CD8-positive, alpha-beta T cell (primary cell): ENCODE measurements at regions of chr22 and their contacts with region 1.

Region 1: DNA sequence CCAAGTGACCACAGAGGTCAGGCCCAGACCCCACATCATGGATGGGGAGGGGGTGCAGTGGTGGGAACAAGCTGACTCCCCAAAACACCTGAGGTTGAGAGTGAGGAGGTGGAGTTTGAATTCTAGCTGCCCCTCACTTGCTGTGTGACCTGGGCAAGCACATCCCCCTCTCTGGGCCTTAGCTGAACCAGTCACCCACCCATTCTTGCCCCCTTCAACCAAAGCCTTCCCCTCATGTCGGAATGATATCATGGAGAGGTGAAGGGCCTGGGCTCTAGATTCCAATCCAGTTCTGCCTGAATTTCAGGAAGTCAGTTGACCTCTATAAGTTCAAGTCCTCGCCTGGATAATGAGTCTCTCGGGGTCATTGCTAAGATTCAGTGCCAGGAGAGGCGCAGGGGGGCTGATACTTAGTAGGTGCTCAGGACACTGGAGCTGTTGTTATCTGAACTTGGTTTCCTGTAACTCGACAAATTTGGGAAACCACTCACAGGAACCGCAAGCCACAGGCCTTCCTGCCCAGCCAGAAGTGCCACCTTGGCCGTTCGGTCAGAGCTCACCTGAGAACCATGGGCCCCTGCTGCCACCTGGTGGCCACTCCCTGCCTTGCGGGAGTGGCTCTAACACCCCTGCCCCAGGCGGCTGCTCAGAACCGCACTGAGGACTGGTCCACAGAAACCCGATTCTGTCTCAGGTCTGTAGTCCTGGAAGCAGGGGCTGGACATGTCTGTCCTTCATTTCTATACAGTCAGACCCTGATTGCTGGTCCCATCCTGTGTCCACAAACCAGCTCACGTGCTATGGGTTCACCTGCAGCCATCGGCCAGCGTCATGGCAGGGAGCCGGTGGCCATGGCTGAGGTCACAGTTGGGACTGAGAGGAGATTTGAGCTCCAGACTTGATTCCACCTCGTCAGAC is 6.9 kb downstream of the CDC42EP1 start:
- DNase-seq: peak; percentile 77 to 97 (median 92)
- ATAC-seq: peak; percentile 85
- H3K4me3 ChIP-seq: peak overlapping the region; percentile 9 to 10
- H3K4me3 Mint-ChIP-seq: peak overlapping the region; percentile 75
- H3K27ac ChIP-seq: no peak overlapping the region
- H3K27ac Mint-ChIP-seq: peak overlapping the region; percentile 66
- H3K4me1 ChIP-seq: peaks cover 24% of the 10 kb centered on the region
- H3K4me1 Mint-ChIP-seq: peaks cover 24% of the 10 kb centered on the region
- H3K27me3 ChIP-seq: peaks cover under 1 to 9% of the 10 kb centered on the region in 2 experiments
- H3K27me3 Mint-ChIP-seq: peaks cover 15% of the 10 kb centered on the region
- CTCF ChIP-seq: peak; percentile 93

Region 2: DNA sequence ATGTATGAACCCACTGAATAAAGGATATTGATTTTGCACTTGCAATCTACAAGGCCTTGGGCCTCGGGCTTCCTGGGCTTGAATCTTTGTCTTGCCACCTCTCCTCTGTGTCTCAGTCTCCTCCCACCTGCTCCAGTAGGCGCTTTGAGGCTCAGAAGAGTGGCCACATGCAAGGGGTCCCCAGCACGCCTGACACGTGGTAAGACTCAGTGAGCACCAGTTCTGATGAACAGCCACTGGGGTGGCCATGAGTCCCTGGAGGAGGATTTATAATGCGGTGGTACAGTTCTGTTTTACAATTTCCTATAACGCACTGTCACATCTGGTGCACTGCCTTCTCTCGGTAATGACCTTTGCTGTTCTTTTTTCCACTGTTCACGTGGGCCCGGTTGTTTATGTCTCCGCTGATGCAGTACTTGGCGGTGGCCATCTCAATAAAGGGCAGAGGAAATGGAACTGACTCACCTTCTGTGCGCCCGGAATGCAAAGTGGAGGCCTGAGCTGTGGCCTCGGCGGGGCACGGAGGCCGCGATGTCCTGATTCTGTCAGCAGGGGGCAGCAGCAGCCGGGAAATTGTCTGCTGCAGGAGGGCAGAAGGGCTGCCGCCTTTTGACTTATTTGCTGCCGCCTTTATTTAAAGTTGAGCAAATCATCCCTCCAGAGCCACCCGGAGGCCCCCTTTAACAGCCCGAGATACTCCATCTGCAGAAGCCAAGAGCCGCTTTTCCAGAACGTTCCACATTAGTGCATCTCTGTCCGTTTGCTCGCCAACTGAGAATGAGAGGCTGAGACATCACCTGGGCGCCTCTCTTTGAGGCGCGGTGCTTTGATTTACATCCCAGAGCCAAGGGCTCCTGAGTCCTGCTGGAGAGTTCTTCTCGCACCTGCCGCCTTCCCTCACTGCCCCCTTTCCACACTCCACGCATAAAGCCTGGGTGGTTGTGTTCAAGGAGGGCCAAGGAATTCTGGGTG is 785.2 kb before region 1 on chr22:
- CTCF ChIA-PET with region 1: no interaction called
- POLR2A ChIA-PET with region 1: no interaction called
- intact Hi-C with region 1: loop called in 1 of 2 experiments (anchors 5 kb)
- DNase-seq: peak; percentile 71 to 93 (median 85)
- ATAC-seq: peak; percentile 96
- H3K4me3 ChIP-seq: no peak overlapping the region
- H3K4me3 Mint-ChIP-seq: no peak overlapping the region
- H3K27ac ChIP-seq: no peak overlapping the region
- H3K27ac Mint-ChIP-seq: peak overlapping the region; percentile 41
- H3K4me1 ChIP-seq: peaks cover 11% of the 10 kb centered on the region
- H3K4me1 Mint-ChIP-seq: peaks cover 16% of the 10 kb centered on the region
- H3K27me3 ChIP-seq: peaks cover 0 to 2% of the 10 kb centered on the region in 2 experiments
- H3K27me3 Mint-ChIP-seq: peaks cover 2% of the 10 kb centered on the region
- CTCF ChIP-seq: peak; percentile 95

Region 3: GRCh38 chr22:37316875-37317371 is 250.2 kb before region 1 on chr22:
- CTCF ChIA-PET with region 1: interaction called, 25 read pairs
- POLR2A ChIA-PET with region 1: interaction called, 7 read pairs
- intact Hi-C with region 1: loop called (anchors 1 kb)
- DNase-seq: peak; percentile 37 to 85 (median 72)
- ATAC-seq: peak; percentile 91
- H3K4me3 ChIP-seq: no peak overlapping the region
- H3K4me3 Mint-ChIP-seq: no peak overlapping the region
- H3K27ac ChIP-seq: no peak overlapping the region
- H3K27ac Mint-ChIP-seq: no peak overlapping the region
- H3K4me1 ChIP-seq: peaks cover 36% of the 10 kb centered on the region
- H3K4me1 Mint-ChIP-seq: peaks cover 42% of the 10 kb centered on the region
- H3K27me3 ChIP-seq: no peaks in the 10 kb centered on the region
- H3K27me3 Mint-ChIP-seq: no peaks in the 10 kb centered on the region
- CTCF ChIP-seq: peak; percentile 85

Region 4: GRCh38 chr22:37486224-37486845 is 80.8 kb before region 1 on chr22 and contains the start of gene MFNG:
- CTCF ChIA-PET with region 1: interaction called, 9 read pairs
- POLR2A ChIA-PET with region 1: interaction called, 4 read pairs
- intact Hi-C with region 1: loop called in 1 of 2 experiments (anchors 2 kb)
- DNase-seq: peak; percentile 35 to 87 (median 74)
- ATAC-seq: peak; percentile 59
- H3K4me3 ChIP-seq: peak within 1 kb of the TSS; percentile 73 to 96
- H3K4me3 Mint-ChIP-seq: peak within 1 kb of the TSS; percentile 94
- H3K27ac ChIP-seq: peak within 1 kb of the TSS; percentile 69 to 87
- H3K27ac Mint-ChIP-seq: peak within 1 kb of the TSS; percentile 98
- H3K4me1 ChIP-seq: peaks cover 62% of the 10 kb centered on the region
- H3K4me1 Mint-ChIP-seq: peaks cover 72% of the 10 kb centered on the region
- H3K27me3 ChIP-seq: no peaks in the 10 kb centered on the region
- H3K27me3 Mint-ChIP-seq: no peaks in the 10 kb centered on the region
- CTCF ChIP-seq: no peak
- total RNA-seq, gene MFNG: 63.2 to 63.9 TPM

Region 5: GRCh38 chr22:37538590-37539357 is 28.4 kb before region 1 on chr22:
- CTCF ChIA-PET with region 1: interaction called, 540 read pairs
- POLR2A ChIA-PET with region 1: interaction called, 32 read pairs
- intact Hi-C with region 1: loop called (anchors 1 kb)
- DNase-seq: peak; percentile 80 to 93 (median 89)
- ATAC-seq: peak; percentile 99
- H3K4me3 ChIP-seq: no peak overlapping the region
- H3K4me3 Mint-ChIP-seq: peak overlapping the region; percentile 56
- H3K27ac ChIP-seq: no peak overlapping the region
- H3K27ac Mint-ChIP-seq: no peak overlapping the region
- H3K4me1 ChIP-seq: peaks cover 16% of the 10 kb centered on the region
- H3K4me1 Mint-ChIP-seq: peaks cover 17% of the 10 kb centered on the region
- H3K27me3 ChIP-seq: peaks cover 0 to 8% of the 10 kb centered on the region in 2 experiments
- H3K27me3 Mint-ChIP-seq: peaks cover 30% of the 10 kb centered on the region
- CTCF ChIP-seq: peak; percentile 89

Region 6: GRCh38 chr22:37588546-37589215 is 21.5 kb after region 1 on chr22:
- CTCF ChIA-PET with region 1: interaction called, 101 read pairs
- POLR2A ChIA-PET with region 1: interaction called, 12 read pairs
- intact Hi-C with region 1: loop called (anchors 1 kb)
- DNase-seq: no peak
- ATAC-seq: no peak
- H3K4me3 ChIP-seq: no peak overlapping the region
- H3K4me3 Mint-ChIP-seq: no peak overlapping the region
- H3K27ac ChIP-seq: no peak overlapping the region
- H3K27ac Mint-ChIP-seq: no peak overlapping the region
- H3K4me1 ChIP-seq: peaks cover 6% of the 10 kb centered on the region
- H3K4me1 Mint-ChIP-seq: peaks cover 11% of the 10 kb centered on the region
- H3K27me3 ChIP-seq: peaks cover 0 to 2% of the 10 kb centered on the region in 2 experiments
- H3K27me3 Mint-ChIP-seq: peaks cover 3% of the 10 kb centered on the region
- CTCF ChIP-seq: no peak

Region 7: DNA sequence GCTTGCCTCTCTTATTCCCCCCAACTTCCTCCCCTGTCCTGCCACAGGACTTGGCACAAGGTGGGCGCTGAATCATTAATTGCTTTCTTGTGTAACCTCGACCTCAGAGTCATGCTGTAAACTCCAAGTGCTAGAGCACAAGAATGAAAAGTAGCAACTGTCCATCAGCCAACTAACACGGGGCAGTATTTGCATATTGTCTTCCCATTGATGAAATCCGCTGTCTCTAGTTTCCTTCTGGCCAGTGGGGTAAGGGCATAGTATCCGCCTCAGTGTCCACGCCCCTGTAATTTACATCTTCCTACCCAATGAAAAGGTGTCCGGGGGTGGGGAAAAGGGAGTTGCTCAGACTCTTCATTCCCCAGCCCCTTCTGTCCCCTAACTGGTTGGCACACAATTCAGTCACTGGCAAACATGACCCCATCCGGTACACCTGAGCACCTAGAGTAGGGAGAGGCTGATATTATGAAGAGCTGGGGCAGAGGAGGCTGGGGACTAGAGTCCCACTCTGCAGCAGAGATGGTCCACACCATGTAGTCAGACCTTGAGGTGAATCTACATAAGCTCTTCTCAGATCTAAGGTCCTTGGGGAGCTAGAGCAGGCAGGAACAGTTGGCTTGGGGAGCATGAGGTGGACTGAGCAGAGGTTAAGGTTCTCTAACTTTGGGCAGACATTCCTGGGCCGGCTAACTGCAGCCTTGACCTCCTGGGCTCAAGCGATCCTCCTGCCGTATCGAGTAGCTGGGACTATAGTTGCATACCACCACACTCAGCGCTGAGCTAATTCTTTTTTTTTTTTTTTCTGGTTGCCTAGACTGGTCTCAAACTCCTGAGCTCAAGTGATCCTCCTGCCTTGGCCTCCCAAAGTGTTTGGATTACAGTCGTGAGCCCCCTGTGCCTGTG is 34.6 kb after region 1 on chr22:
- CTCF ChIA-PET with region 1: interaction called, 26 read pairs
- POLR2A ChIA-PET with region 1: interaction called, 4 read pairs
- intact Hi-C with region 1: loop called in 1 of 2 experiments (anchors 5 kb)
- DNase-seq: no peak
- ATAC-seq: no peak
- H3K4me3 ChIP-seq: no peak overlapping the region
- H3K4me3 Mint-ChIP-seq: no peak overlapping the region
- H3K27ac ChIP-seq: no peak overlapping the region
- H3K27ac Mint-ChIP-seq: no peak overlapping the region
- H3K4me1 ChIP-seq: peaks cover 27% of the 10 kb centered on the region
- H3K4me1 Mint-ChIP-seq: peaks cover 31% of the 10 kb centered on the region
- H3K27me3 ChIP-seq: no peaks in the 10 kb centered on the region
- H3K27me3 Mint-ChIP-seq: no peaks in the 10 kb centered on the region
- CTCF ChIP-seq: no peak

Region 8: DNA sequence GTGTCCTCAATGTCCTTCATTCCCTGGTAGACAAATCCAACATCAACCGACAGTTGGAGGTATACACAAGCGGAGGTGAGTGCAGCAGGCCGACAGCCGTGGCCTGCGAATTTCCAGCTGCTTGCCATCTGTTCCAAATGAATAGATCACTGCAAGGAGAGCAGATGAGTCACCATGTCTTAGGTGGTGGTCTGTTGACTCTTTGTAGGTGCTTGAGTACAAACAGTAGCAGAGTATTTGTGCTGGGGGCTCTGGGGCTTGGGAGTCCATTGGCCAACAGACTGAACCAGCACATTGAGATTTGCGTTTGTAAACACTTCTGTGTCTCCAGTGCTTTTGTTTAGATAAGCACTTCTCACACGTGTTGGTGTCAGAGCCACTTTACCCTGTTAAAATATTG is 303.1 kb after region 1 on chr22:
- CTCF ChIA-PET with region 1: no interaction called
- POLR2A ChIA-PET with region 1: no interaction called
- intact Hi-C with region 1: no loop called
- DNase-seq: no peak
- ATAC-seq: no peak
- H3K4me3 ChIP-seq: no peak overlapping the region
- H3K4me3 Mint-ChIP-seq: no peak overlapping the region
- H3K27ac ChIP-seq: no peak overlapping the region
- H3K27ac Mint-ChIP-seq: no peak overlapping the region
- H3K4me1 ChIP-seq: no peaks in the 10 kb centered on the region
- H3K4me1 Mint-ChIP-seq: peaks cover 1% of the 10 kb centered on the region
- H3K27me3 ChIP-seq: no peaks in the 10 kb centered on the region
- H3K27me3 Mint-ChIP-seq: no peaks in the 10 kb centered on the region
- CTCF ChIP-seq: no peak

Region 9: DNA sequence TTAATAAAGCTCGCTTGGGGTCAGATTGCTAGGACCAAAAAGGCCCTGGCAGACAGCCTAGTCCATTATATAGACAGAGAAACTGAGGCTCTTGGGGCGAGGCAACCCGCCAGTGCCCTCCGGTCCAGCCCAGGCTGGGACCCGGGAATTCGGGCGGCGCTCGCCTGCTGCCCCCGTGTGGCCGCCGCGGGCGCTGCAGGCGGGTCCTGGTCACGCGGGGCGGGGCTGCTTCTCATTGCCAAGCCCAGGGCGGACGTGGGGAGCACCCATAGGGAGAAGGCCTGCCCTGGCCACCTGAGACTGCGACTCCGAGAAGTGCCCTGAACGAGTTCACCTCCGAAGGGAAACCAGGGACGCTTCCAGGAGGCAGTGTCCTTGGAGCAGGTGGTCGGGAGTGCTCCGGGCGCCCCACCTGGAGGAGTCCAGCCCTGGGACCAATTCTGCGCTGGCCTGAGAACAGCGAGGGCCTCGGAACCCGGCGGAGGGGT is 786.0 kb after region 1 on chr22:
- CTCF ChIA-PET with region 1: no interaction called
- POLR2A ChIA-PET with region 1: no interaction called
- intact Hi-C with region 1: no loop called
- DNase-seq: peak; percentile 46 to 87 (median 69)
- ATAC-seq: peak; percentile 98
- H3K4me3 ChIP-seq: no peak overlapping the region
- H3K4me3 Mint-ChIP-seq: no peak overlapping the region
- H3K27ac ChIP-seq: no peak overlapping the region
- H3K27ac Mint-ChIP-seq: no peak overlapping the region
- H3K4me1 ChIP-seq: peaks cover 6% of the 10 kb centered on the region
- H3K4me1 Mint-ChIP-seq: no peaks in the 10 kb centered on the region
- H3K27me3 ChIP-seq: no peaks in the 10 kb centered on the region
- H3K27me3 Mint-ChIP-seq: no peaks in the 10 kb centered on the region
- CTCF ChIP-seq: peak; percentile 99